T-cell (primary cell): ENCODE measurements at regions of chr17 and their contacts with region 1.

Region 1: DNA sequence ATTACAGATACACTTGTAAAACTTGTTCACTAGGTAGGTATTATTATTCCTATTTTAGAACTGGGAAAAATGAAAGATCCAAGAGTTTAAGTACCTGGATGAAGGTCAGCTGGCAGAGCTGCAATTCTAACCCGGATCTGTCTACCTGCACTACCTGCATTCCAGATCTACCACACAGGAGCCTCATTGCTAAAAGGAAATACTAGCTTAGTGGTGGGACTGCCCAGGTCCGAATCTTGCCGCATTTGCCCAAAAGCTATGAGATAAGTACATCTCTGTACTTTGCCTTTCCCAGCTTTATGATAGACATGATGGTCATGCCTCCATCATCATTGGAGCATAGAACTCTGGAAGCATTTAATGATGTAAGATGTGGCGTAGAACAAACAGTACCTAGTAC is 36.8 kb upstream of the TEKT3 start:
- DNase-seq: no peak
- ATAC-seq: no peak
- H3K4me3 ChIP-seq: no peak overlapping the region
- H3K4me3 Mint-ChIP-seq: no peak overlapping the region
- H3K27ac ChIP-seq: no peak overlapping the region
- H3K27ac Mint-ChIP-seq: no peak overlapping the region
- H3K4me1 ChIP-seq: no peaks in the 10 kb centered on the region
- H3K4me1 Mint-ChIP-seq: no peaks in the 10 kb centered on the region
- H3K27me3 ChIP-seq: peaks cover 0 to 9% of the 10 kb centered on the region in 2 experiments
- H3K27me3 Mint-ChIP-seq: peaks cover 18 to 27% of the 10 kb centered on the region in 2 donors

Region 2: DNA sequence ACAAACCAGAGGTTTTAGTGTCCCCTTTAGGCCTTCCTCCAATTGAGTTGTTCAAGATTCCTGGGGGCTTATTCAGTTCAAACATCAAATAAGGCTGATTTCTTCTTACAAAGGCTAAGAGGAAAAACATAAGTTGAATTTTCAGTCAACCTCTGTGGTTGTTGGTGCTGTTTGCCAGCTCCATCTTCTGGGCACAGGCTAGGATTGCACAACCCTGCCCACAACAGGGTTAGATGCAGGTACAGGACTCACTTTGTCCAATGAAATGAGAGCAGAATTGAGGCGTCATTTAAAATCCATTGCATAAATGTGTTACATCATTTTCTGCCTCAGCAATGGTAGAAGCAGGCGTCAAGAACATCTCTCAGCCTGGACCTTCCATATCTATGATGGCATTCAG is 286.4 kb before region 1 on chr17:
- CTCF ChIA-PET with region 1: no interaction called
- POLR2A ChIA-PET with region 1: no interaction called
- DNase-seq: no peak
- ATAC-seq: no peak
- H3K4me3 ChIP-seq: no peak overlapping the region
- H3K4me3 Mint-ChIP-seq: no peak overlapping the region
- H3K27ac ChIP-seq: no peak overlapping the region
- H3K27ac Mint-ChIP-seq: no peak overlapping the region
- H3K4me1 ChIP-seq: no peaks in the 10 kb centered on the region
- H3K4me1 Mint-ChIP-seq: no peaks in the 10 kb centered on the region
- H3K27me3 ChIP-seq: peaks cover 0 to under 1% of the 10 kb centered on the region in 2 experiments
- H3K27me3 Mint-ChIP-seq: peaks cover 9 to 22% of the 10 kb centered on the region in 2 donors

Region 3: DNA sequence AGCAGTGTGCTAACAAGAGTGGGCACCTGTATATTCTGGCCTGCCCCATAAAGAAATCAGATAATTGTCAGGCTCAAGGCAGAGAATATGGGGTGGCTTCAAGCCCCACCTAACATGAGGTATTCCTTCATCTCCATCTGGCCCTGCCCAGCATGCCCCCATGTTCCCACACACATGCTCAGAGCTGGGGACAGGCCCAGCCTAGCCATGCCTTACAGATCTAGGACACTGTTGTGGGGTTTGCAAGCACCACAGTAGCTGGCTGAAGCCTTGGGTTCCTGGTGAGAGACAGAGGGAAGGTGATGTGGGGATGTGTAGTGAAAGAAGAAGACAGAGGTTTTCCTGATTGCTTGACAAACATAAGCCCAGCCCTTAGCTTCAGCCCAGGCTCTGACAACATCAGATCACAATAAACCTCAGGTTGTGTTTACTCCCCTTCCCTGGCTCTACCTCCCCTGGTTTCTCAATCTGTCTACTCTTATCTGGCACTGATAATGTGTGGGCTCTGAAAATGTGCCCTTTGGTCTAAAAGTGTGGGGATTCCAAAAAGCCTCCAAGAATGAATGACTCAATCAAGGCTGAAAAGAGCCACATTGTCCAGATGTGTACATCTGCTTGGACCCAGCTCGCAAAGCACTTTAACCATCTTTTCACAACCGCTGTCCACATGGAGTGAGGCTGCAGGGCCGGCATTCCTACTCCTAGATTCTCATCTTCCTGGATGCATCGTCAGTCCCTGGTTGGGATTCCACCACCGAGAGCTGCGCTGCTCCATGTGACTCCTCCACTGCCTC is 54.8 kb after region 1 on chr17:
- CTCF ChIA-PET with region 1: interaction called in 1 of 2 experiments, 10 read pairs
- POLR2A ChIA-PET with region 1: no interaction called
- DNase-seq: no peak
- ATAC-seq: no peak
- H3K4me3 ChIP-seq: no peak overlapping the region
- H3K4me3 Mint-ChIP-seq: no peak overlapping the region
- H3K27ac ChIP-seq: no peak overlapping the region
- H3K27ac Mint-ChIP-seq: no peak overlapping the region
- H3K4me1 ChIP-seq: peaks cover 2 to 12% of the 10 kb centered on the region in 2 experiments
- H3K4me1 Mint-ChIP-seq: peaks cover 9 to 15% (median 14%) of the 10 kb centered on the region in 3 donors
- H3K27me3 ChIP-seq: no peaks in the 10 kb centered on the region
- H3K27me3 Mint-ChIP-seq: no peaks in the 10 kb centered on the region